ENCODE measurements at regions of chr1 and their contacts with region 1.

Region 1: GRCh38 chr1:92872719-92873118 is 40.9 kb downstream of the RPL5 start:
- DNase-seq: no peak
- ATAC-seq: no peak
- H3K4me3 ChIP-seq: no peak overlapping the region
- H3K4me3 Mint-ChIP-seq: no peak overlapping the region
- H3K27ac ChIP-seq: no peak overlapping the region
- H3K27ac Mint-ChIP-seq: peak overlapping the region in 1 of 9 donors; percentile 41
- H3K4me1 ChIP-seq: peaks cover 8 to 17% of the 10 kb centered on the region in 2 donors
- H3K4me1 Mint-ChIP-seq: peaks cover 10 to 45% (median 39%) of the 10 kb centered on the region in 7 donors
- H3K27me3 ChIP-seq: no peaks in the 10 kb centered on the region
- H3K27me3 Mint-ChIP-seq: no peaks in the 10 kb centered on the region

Region 2: DNA sequence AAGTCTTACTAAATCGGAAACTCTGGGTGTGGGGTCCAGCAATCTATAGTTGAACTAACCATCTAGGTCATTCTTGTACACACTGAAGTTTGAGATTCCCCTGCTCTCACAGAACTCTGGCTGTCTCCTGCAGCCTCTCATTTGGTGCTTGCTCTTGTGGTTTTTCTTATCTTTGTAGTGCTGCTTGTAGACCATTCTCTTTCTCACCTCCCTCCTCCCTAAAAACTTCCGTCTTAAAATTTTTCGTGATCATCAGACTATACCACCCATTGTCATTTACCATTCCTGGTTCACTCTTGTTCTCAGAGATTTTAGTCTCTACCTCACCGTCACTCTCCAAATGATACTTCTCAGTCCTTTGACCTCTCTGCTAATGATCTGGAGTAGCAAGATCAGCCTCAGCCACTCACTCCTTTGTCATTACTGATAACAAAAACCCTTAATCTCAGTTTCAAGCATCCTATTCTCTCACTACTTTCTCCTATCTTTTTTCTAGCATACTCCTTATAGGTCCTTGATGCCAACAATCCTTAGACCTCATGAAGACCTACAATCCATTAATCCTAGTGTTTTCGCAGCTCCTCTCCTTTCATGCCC is 855.9 kb before region 1 on chr1:
- CTCF ChIA-PET with region 1: no interaction called
- POLR2A ChIA-PET with region 1: no interaction called
- intact Hi-C with region 1: no loop called
- DNase-seq: peak in 1 of 9 donors; percentile 9
- ATAC-seq: peak; percentile 50
- H3K4me3 ChIP-seq: peak overlapping the region; percentile 30
- H3K4me3 Mint-ChIP-seq: peak overlapping the region in 8 of 10 donors; percentile 0 to 35 (median 6)
- H3K27ac ChIP-seq: no peak overlapping the region
- H3K27ac Mint-ChIP-seq: peak overlapping the region in 4 of 9 donors; percentile 0 to 5 (median 4)
- H3K4me1 ChIP-seq: peaks cover 10 to 18% of the 10 kb centered on the region in 2 donors
- H3K4me1 Mint-ChIP-seq: peaks cover 10 to 19% (median 17%) of the 10 kb centered on the region in 7 donors
- H3K27me3 ChIP-seq: no peaks in the 10 kb centered on the region
- H3K27me3 Mint-ChIP-seq: peaks cover 0 to 17% (median 7%) of the 10 kb centered on the region in 5 donors

Region 3: GRCh38 chr1:92882819-92883218 is 10.1 kb after region 1 on chr1:
- CTCF ChIA-PET with region 1: interaction called, 3 read pairs
- POLR2A ChIA-PET with region 1: interaction called, 4 read pairs
- intact Hi-C with region 1: loop called in 1 of 2 experiments (anchors 1 kb)
- DNase-seq: peak in 7 of 9 donors; percentile 43 to 65 (median 49)
- ATAC-seq: peak; percentile 95
- H3K4me3 ChIP-seq: no peak overlapping the region
- H3K4me3 Mint-ChIP-seq: peak overlapping the region in 9 of 10 donors; percentile 22 to 68 (median 51)
- H3K27ac ChIP-seq: peak overlapping the region; percentile 54
- H3K27ac Mint-ChIP-seq: peak overlapping the region; percentile 45 to 96 (median 92)
- H3K4me1 ChIP-seq: peaks cover 18 to 25% of the 10 kb centered on the region in 2 donors
- H3K4me1 Mint-ChIP-seq: peaks cover 24 to 61% (median 48%) of the 10 kb centered on the region in 7 donors
- H3K27me3 ChIP-seq: no peaks in the 10 kb centered on the region
- H3K27me3 Mint-ChIP-seq: no peaks in the 10 kb centered on the region